Natural killer cell (primary cell): ENCODE measurements at regions of chr4 and their contacts with region 1.

Region 1: DNA sequence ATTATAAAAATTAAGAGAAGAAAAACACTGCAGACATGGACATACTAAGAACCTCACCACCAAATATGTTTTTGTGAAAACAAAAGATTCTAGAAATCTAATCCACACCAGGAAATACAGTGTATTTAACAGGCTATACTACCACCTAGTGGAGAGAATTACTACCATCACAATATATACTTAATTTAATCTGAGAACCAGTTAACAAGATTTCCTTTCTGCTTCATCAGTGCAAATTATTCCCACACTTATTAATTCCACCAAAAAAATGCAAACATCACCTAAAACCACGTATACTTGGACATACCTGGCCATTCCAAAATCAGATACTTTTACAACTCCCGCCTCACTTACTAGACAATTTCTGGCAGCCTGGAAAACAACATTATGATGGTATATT is 7.0 kb upstream of the TXK start:
- DNase-seq: peak in 1 of 2 donors; percentile 77
- ATAC-seq: peak; percentile 75 to 79 (median 75)
- H3K4me3 ChIP-seq: no peak overlapping the region
- H3K4me3 Mint-ChIP-seq: no peak overlapping the region
- H3K27ac ChIP-seq: no peak overlapping the region
- H3K27ac Mint-ChIP-seq: peak overlapping the region in 1 of 2 donors; percentile 91
- H3K4me1 ChIP-seq: peaks cover 41% of the 10 kb centered on the region
- H3K4me1 Mint-ChIP-seq: peaks cover 46 to 50% of the 10 kb centered on the region in 2 donors
- H3K27me3 ChIP-seq: no peaks in the 10 kb centered on the region
- H3K27me3 Mint-ChIP-seq: no peaks in the 10 kb centered on the region
- CTCF ChIP-seq: peak; percentile 71

Region 2: DNA sequence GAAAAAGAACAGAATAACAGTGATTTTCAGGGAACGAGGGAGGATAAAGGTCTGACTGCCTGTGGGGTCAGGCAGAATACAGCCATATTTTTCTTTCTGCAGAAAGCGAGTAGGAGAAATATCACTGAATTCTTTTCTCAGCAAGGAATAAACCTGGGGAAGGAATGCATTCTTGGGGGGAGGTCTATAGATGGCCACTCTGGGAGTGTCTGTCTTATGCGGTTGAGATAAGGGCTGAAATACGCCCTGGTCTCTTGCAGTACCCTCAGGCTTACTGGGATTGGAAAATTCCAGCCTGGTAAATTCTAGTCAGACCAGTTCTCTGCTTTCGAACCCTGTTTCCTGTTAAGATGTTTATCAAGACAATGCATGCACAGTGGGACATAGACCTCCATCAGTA is 150.9 kb before region 1 on chr4:
- intact Hi-C with region 1: no loop called
- DNase-seq: no peak
- ATAC-seq: no peak
- H3K4me3 ChIP-seq: no peak overlapping the region
- H3K4me3 Mint-ChIP-seq: no peak overlapping the region
- H3K27ac ChIP-seq: no peak overlapping the region
- H3K27ac Mint-ChIP-seq: no peak overlapping the region
- H3K4me1 ChIP-seq: no peaks in the 10 kb centered on the region
- H3K4me1 Mint-ChIP-seq: peaks cover 0 to 6% of the 10 kb centered on the region in 2 donors
- H3K27me3 ChIP-seq: peaks cover 4% of the 10 kb centered on the region
- H3K27me3 Mint-ChIP-seq: peaks cover 20 to 35% of the 10 kb centered on the region in 2 donors
- CTCF ChIP-seq: no peak

Region 3: GRCh38 chr4:48033825-48034413 is 107.1 kb before region 1 on chr4:
- intact Hi-C with region 1: loop called (anchors 1 kb)
- DNase-seq: peak; percentile 55 to 78
- ATAC-seq: peak; percentile 84 to 99 (median 98)
- H3K4me3 ChIP-seq: no peak overlapping the region
- H3K4me3 Mint-ChIP-seq: no peak overlapping the region
- H3K27ac ChIP-seq: no peak overlapping the region
- H3K27ac Mint-ChIP-seq: peak overlapping the region in 1 of 2 donors; percentile 19
- H3K4me1 ChIP-seq: peaks cover 8% of the 10 kb centered on the region
- H3K4me1 Mint-ChIP-seq: peaks cover 6 to 7% of the 10 kb centered on the region in 2 donors
- H3K27me3 ChIP-seq: no peaks in the 10 kb centered on the region
- H3K27me3 Mint-ChIP-seq: peaks cover 0 to 17% of the 10 kb centered on the region in 2 donors
- CTCF ChIP-seq: peak; percentile 83

Region 4: DNA sequence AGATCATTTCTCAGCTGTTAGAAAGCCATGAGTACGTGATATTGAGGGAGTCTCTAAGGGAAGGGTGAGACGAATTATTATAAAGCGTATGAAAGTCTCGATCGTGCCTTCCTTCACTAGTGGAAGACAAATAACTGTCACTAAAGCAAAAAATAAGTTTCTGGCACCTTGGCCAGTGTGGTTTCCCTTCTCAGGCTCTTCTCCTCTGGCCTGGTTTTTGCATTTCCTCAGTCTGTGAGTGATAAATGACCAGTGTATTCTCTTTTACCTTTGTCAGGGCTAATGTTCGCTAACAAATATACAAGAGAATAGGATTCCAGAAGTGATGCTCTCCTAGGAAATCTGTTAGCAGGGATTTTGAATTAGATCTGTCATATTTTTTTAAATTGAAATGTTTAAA is 26.6 kb before region 1 on chr4:
- intact Hi-C with region 1: loop called (anchors 1 kb)
- DNase-seq: no peak
- ATAC-seq: peak; percentile 63 to 78 (median 71)
- H3K4me3 ChIP-seq: peak overlapping the region; percentile 78
- H3K4me3 Mint-ChIP-seq: peak overlapping the region; percentile 100
- H3K27ac ChIP-seq: peak overlapping the region; percentile 74
- H3K27ac Mint-ChIP-seq: peak overlapping the region; percentile 98 to 99
- H3K4me1 ChIP-seq: peaks cover 28% of the 10 kb centered on the region
- H3K4me1 Mint-ChIP-seq: peaks cover 84 to 93% of the 10 kb centered on the region in 2 donors
- H3K27me3 ChIP-seq: no peaks in the 10 kb centered on the region
- H3K27me3 Mint-ChIP-seq: no peaks in the 10 kb centered on the region
- CTCF ChIP-seq: no peak

Region 5: GRCh38 chr4:48329976-48330375 is 188.9 kb after region 1 on chr4:
- intact Hi-C with region 1: no loop called
- DNase-seq: no peak
- ATAC-seq: no peak
- H3K4me3 ChIP-seq: no peak overlapping the region
- H3K4me3 Mint-ChIP-seq: no peak overlapping the region
- H3K27ac ChIP-seq: no peak overlapping the region
- H3K27ac Mint-ChIP-seq: no peak overlapping the region
- H3K4me1 ChIP-seq: no peaks in the 10 kb centered on the region
- H3K4me1 Mint-ChIP-seq: no peaks in the 10 kb centered on the region
- H3K27me3 ChIP-seq: no peaks in the 10 kb centered on the region
- H3K27me3 Mint-ChIP-seq: peaks cover 5 to 7% of the 10 kb centered on the region in 2 donors
- CTCF ChIP-seq: no peak